ENCODE measurements at regions of chr19 and their contacts with region 1.

Region 1: GRCh38 chr19:36418287-36419001 is at the start of gene ZFP82:
- DNase-seq: peak; percentile 91
- ATAC-seq: peak; percentile 96
- H3K4me3 ChIP-seq: peak within 1 kb of the TSS; percentile 27 to 98 (median 85)
- H3K4me3 Mint-ChIP-seq: peak within 1 kb of the TSS; percentile 97
- H3K27ac ChIP-seq: peak within 1 kb of the TSS; percentile 90 to 95
- H3K27ac Mint-ChIP-seq: peak within 1 kb of the TSS; percentile 96
- H3K4me1 ChIP-seq: peaks cover 17 to 23% of the 10 kb centered on the region in 2 donors
- H3K4me1 Mint-ChIP-seq: peaks cover 33% of the 10 kb centered on the region
- H3K27me3 ChIP-seq: peaks cover 0 to 21% (median 13%) of the 10 kb centered on the region in 4 experiments
- H3K27me3 Mint-ChIP-seq: peaks cover 17% of the 10 kb centered on the region
- CTCF ChIP-seq: no peak
- total RNA-seq, gene ZFP82: 14.4 and 14.6 TPM in 2 replicates

Region 2: DNA sequence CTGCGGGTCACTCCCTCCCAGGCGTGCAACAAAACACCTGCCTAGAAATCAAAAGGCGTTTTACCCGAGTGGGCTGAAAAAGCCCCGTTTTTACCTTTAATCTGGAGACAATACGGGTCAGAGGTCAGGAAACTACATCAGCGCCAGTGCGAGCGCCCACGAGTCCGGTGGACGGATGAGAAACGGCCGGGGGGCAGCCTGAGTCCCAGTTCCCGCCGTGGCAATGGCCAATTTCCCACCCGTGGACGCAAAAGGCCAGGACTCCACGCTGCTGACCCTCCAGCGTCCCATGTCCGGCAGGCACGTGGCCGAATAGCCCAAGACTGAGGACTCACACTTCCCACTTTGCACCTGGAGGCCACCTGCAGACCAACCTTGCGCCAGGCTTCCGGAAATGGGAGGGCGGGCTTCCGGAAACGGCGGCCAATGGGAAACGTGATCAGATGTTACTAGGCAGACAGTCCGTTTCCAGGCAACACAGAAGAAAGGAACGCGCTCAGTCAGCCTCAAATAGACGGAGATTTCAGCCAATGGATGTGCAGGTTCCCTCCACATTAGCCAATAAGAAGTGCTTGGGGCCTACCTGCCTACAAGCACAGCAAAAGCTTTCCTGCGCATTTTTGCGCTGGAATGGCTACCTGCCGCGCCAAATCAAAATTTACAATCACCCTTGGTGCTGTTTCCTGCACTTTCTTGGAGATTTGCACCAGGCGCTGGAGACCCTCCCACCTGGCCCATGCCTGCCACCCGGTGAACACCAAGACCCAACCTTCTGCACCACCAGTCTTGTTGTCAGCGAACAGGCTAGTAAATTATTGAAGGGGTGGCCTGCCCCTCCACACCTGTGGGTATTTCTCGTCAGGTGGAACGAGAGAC is 86.9 kb before region 1 on chr19:
- CTCF ChIA-PET with region 1: no interaction called
- POLR2A ChIA-PET with region 1: no interaction called
- intact Hi-C with region 1: loop called (anchors 1 kb)
- DNase-seq: peak; percentile 94
- ATAC-seq: peak; percentile 97
- H3K4me3 ChIP-seq: peak overlapping the region; percentile 55 to 76 (median 75)
- H3K4me3 Mint-ChIP-seq: peak overlapping the region; percentile 89
- H3K27ac ChIP-seq: peak overlapping the region; percentile 14 to 60
- H3K27ac Mint-ChIP-seq: peak overlapping the region; percentile 87
- H3K4me1 ChIP-seq: peaks cover 15 to 17% of the 10 kb centered on the region in 2 donors
- H3K4me1 Mint-ChIP-seq: peaks cover 24% of the 10 kb centered on the region
- H3K27me3 ChIP-seq: no peaks in the 10 kb centered on the region
- H3K27me3 Mint-ChIP-seq: no peaks in the 10 kb centered on the region
- CTCF ChIP-seq: no peak

Region 3: DNA sequence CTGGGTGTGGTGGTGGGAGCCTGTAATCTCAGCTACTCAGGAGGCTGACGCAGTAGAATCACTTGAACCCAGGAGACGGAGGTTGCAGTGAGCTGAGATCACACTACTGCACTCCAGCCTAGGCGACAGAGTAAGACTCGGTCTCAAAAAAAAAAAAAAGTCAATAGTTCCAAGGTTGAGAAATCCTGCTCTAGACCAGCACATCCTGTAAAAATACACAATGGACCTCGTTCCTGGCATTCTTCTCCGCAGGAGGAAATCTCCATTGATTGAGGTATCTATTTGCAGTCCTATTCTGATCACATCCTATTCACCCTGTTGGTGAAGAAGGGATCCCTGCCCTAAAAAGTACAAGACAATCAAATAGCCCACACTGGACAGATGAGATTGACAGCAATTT is 54.6 kb before region 1 on chr19:
- CTCF ChIA-PET with region 1: no interaction called
- POLR2A ChIA-PET with region 1: no interaction called
- intact Hi-C with region 1: no loop called
- DNase-seq: no peak
- ATAC-seq: no peak
- H3K4me3 ChIP-seq: no peak overlapping the region
- H3K4me3 Mint-ChIP-seq: no peak overlapping the region
- H3K27ac ChIP-seq: no peak overlapping the region
- H3K27ac Mint-ChIP-seq: no peak overlapping the region
- H3K4me1 ChIP-seq: no peaks in the 10 kb centered on the region
- H3K4me1 Mint-ChIP-seq: no peaks in the 10 kb centered on the region
- H3K27me3 ChIP-seq: no peaks in the 10 kb centered on the region
- H3K27me3 Mint-ChIP-seq: no peaks in the 10 kb centered on the region
- CTCF ChIP-seq: no peak

Measured in B cell (primary cell).